Natural killer cell (primary cell): ENCODE measurements at regions of chr14 and their contacts with region 1.

Region 1: GRCh38 chr14:35201066-35201465 is 78.7 kb downstream of the PRORP start:
- DNase-seq: peak in 1 of 2 donors; percentile 41
- ATAC-seq: no peak
- H3K4me3 ChIP-seq: no peak overlapping the region
- H3K4me3 Mint-ChIP-seq: peak overlapping the region; percentile 25
- H3K27ac ChIP-seq: no peak overlapping the region
- H3K27ac Mint-ChIP-seq: peak overlapping the region; percentile 60 to 64
- H3K4me1 ChIP-seq: peaks cover 24% of the 10 kb centered on the region
- H3K4me1 Mint-ChIP-seq: peaks cover 38 to 39% of the 10 kb centered on the region in 2 donors
- H3K27me3 ChIP-seq: no peaks in the 10 kb centered on the region
- H3K27me3 Mint-ChIP-seq: no peaks in the 10 kb centered on the region
- CTCF ChIP-seq: no peak

Region 2: GRCh38 chr14:35159742-35160409 is 41.2 kb before region 1 on chr14:
- intact Hi-C with region 1: loop called (anchors 2 kb)
- DNase-seq: peak in 1 of 2 donors; percentile 35
- ATAC-seq: no peak
- H3K4me3 ChIP-seq: no peak overlapping the region
- H3K4me3 Mint-ChIP-seq: no peak overlapping the region
- H3K27ac ChIP-seq: no peak overlapping the region
- H3K27ac Mint-ChIP-seq: peak overlapping the region; percentile 43 to 77
- H3K4me1 ChIP-seq: peaks cover 4% of the 10 kb centered on the region
- H3K4me1 Mint-ChIP-seq: peaks cover 27 to 33% of the 10 kb centered on the region in 2 donors
- H3K27me3 ChIP-seq: no peaks in the 10 kb centered on the region
- H3K27me3 Mint-ChIP-seq: no peaks in the 10 kb centered on the region
- CTCF ChIP-seq: no peak

Region 3: GRCh38 chr14:35292051-35292769 is 91.1 kb after region 1 on chr14 and contains the start of gene PSMA6:
- intact Hi-C with region 1: loop called (anchors 5 kb)
- DNase-seq: peak; percentile 96 to 100
- ATAC-seq: peak; percentile 91 to 97 (median 92)
- H3K4me3 ChIP-seq: peak within 1 kb of the TSS; percentile 63
- H3K4me3 Mint-ChIP-seq: peak within 1 kb of the TSS; percentile 97
- H3K27ac ChIP-seq: peak within 1 kb of the TSS; percentile 81
- H3K27ac Mint-ChIP-seq: peak within 1 kb of the TSS; percentile 98 to 99
- H3K4me1 ChIP-seq: peaks cover 31% of the 10 kb centered on the region
- H3K4me1 Mint-ChIP-seq: peaks cover 43 to 45% of the 10 kb centered on the region in 2 donors
- H3K27me3 ChIP-seq: no peaks in the 10 kb centered on the region
- H3K27me3 Mint-ChIP-seq: no peaks in the 10 kb centered on the region
- CTCF ChIP-seq: no peak
- total RNA-seq, gene PSMA6: 130 to 141 (median 139) TPM

Region 4: DNA sequence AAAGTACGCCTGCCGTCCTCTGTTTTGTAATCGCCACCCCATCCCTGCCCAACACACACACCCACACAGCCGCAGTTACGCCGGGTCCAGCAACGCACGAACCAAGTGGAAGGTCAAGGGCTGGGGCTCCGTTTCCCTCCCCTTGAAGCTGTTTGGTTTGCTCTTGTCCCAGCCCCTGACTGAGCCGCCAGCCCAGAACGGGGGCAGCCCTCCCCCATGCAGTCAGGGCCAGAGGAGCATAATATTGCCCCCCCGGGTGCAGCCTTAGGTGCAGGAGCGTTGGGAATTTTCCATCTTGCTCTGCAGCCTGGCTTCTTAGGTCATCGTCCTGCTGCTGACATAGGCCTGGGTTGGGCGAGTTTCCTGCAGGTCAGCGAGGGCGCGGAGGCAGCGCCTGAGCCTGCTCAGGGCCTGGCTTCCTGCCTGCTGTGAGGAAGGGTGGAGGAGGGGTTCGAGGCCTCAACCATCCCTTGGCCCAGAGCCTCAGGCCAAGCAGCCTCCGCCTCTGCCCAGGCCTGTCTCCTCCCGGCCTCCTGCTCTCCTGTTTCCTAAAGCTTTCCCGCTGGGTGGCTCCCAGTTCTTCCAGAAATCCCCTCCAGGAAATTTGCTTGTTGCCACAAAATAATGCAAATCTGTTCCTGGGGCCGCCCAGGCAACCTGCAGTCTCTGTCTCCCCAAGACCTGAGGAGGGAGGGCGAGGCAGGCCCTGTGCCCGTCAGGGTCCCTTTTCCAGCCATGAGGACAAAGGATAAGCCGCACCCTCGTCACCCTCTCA is 135.6 kb after region 1 on chr14:
- intact Hi-C with region 1: loop called (anchors 10 kb)
- DNase-seq: no peak
- ATAC-seq: no peak
- H3K4me3 ChIP-seq: no peak overlapping the region
- H3K4me3 Mint-ChIP-seq: peak overlapping the region; percentile 70
- H3K27ac ChIP-seq: no peak overlapping the region
- H3K27ac Mint-ChIP-seq: peak overlapping the region; percentile 79 to 85
- H3K4me1 ChIP-seq: peaks cover 73% of the 10 kb centered on the region
- H3K4me1 Mint-ChIP-seq: peaks cover 33 to 53% of the 10 kb centered on the region in 2 donors
- H3K27me3 ChIP-seq: no peaks in the 10 kb centered on the region
- H3K27me3 Mint-ChIP-seq: no peaks in the 10 kb centered on the region
- CTCF ChIP-seq: no peak

Region 5: DNA sequence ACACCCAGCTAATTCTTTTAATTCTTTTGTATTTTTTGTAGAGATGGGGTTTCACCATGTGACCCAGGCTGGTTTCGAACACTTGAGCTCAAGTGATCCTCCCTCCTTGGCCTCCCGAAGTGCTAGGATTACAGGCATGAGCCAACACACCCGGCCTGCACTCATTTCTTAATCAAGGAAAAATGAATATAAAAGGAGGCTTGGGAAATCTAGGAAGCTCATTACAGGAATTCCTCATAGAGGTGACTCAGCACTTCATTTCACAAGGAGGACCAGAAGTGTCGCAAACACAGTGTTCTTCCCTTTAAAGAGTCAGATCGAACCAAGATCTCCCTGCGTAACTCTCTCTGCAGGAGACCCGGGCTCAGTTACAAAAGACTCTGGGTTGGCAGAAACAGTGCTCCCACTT is 173.2 kb after region 1 on chr14:
- intact Hi-C with region 1: no loop called
- DNase-seq: no peak
- ATAC-seq: no peak
- H3K4me3 ChIP-seq: no peak overlapping the region
- H3K4me3 Mint-ChIP-seq: no peak overlapping the region
- H3K27ac ChIP-seq: no peak overlapping the region
- H3K27ac Mint-ChIP-seq: no peak overlapping the region
- H3K4me1 ChIP-seq: no peaks in the 10 kb centered on the region
- H3K4me1 Mint-ChIP-seq: no peaks in the 10 kb centered on the region
- H3K27me3 ChIP-seq: no peaks in the 10 kb centered on the region
- H3K27me3 Mint-ChIP-seq: no peaks in the 10 kb centered on the region
- CTCF ChIP-seq: no peak